ENCODE measurements at regions of chr10 and their contacts with region 1.

Region 1: DNA sequence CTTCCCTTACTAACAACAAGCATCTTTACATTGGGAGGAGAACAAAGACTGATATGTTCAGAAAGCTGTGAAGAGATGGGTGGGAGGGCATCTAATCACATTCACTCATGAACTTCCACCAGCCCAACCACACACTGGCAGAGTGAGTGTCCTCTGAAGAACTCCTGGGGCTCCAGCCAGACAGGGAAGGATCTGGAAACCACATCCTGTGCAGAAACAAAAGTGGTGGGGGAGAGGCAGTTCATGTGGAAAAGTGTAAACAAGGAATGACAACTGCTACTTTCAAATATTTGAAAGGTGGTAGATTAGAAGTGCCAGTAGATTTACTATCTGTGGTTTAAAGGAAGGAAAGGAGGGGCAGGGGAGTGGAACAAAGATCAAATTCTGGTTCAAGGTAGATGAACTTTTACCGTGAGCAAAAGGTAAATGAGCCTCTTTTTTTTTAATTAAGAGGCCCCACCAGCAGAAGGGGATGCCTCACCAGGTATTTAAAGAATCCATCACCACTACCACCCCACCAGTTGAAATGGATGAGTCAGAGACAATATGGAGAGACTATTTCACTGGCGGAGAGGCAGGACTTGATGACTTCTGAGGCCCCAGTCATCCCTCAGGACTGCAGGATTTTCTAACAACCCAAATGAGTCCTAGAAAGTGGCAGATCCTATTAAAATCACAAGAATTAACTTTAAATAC is 34.5 kb downstream of the GOT1 start:
- DNase-seq: no peak
- ATAC-seq: no peak
- H3K4me3 ChIP-seq: no peak overlapping the region
- H3K4me3 Mint-ChIP-seq: no peak overlapping the region
- H3K27ac ChIP-seq: no peak overlapping the region
- H3K27ac Mint-ChIP-seq: peak overlapping the region; percentile 69
- H3K4me1 ChIP-seq: no peaks in the 10 kb centered on the region
- H3K4me1 Mint-ChIP-seq: peaks cover 9% of the 10 kb centered on the region
- H3K27me3 ChIP-seq: no peaks in the 10 kb centered on the region
- H3K27me3 Mint-ChIP-seq: no peaks in the 10 kb centered on the region
- CTCF ChIP-seq: no peak

Region 2: GRCh38 chr10:99372546-99373271 is 23.2 kb before region 1 on chr10:
- CTCF ChIA-PET with region 1: interaction called, 20 read pairs
- POLR2A ChIA-PET with region 1: no interaction called
- intact Hi-C with region 1: no loop called
- DNase-seq: no peak
- ATAC-seq: no peak
- H3K4me3 ChIP-seq: no peak overlapping the region
- H3K4me3 Mint-ChIP-seq: no peak overlapping the region
- H3K27ac ChIP-seq: no peak overlapping the region
- H3K27ac Mint-ChIP-seq: no peak overlapping the region
- H3K4me1 ChIP-seq: no peaks in the 10 kb centered on the region
- H3K4me1 Mint-ChIP-seq: peaks cover 5% of the 10 kb centered on the region
- H3K27me3 ChIP-seq: no peaks in the 10 kb centered on the region
- H3K27me3 Mint-ChIP-seq: peaks cover 20% of the 10 kb centered on the region
- CTCF ChIP-seq: no peak

Region 3: GRCh38 chr10:99382181-99382580 is 13.7 kb before region 1 on chr10:
- CTCF ChIA-PET with region 1: interaction called, 16 read pairs
- POLR2A ChIA-PET with region 1: no interaction called
- intact Hi-C with region 1: no loop called
- DNase-seq: no peak
- ATAC-seq: no peak
- H3K4me3 ChIP-seq: no peak overlapping the region
- H3K4me3 Mint-ChIP-seq: no peak overlapping the region
- H3K27ac ChIP-seq: no peak overlapping the region
- H3K27ac Mint-ChIP-seq: no peak overlapping the region
- H3K4me1 ChIP-seq: no peaks in the 10 kb centered on the region
- H3K4me1 Mint-ChIP-seq: no peaks in the 10 kb centered on the region
- H3K27me3 ChIP-seq: no peaks in the 10 kb centered on the region
- H3K27me3 Mint-ChIP-seq: peaks cover 3% of the 10 kb centered on the region
- CTCF ChIP-seq: no peak

Region 4: GRCh38 chr10:99435986-99436638 is 40.2 kb after region 1 on chr10:
- CTCF ChIA-PET with region 1: interaction called, 11 read pairs
- POLR2A ChIA-PET with region 1: no interaction called
- intact Hi-C with region 1: loop called in 1 of 2 experiments (anchors 2 kb)
- DNase-seq: peak in 2 of 9 experiments; percentile 51 to 58
- ATAC-seq: peak; percentile 62
- H3K4me3 ChIP-seq: no peak overlapping the region
- H3K4me3 Mint-ChIP-seq: no peak overlapping the region
- H3K27ac ChIP-seq: no peak overlapping the region
- H3K27ac Mint-ChIP-seq: no peak overlapping the region
- H3K4me1 ChIP-seq: peaks cover 10% of the 10 kb centered on the region
- H3K4me1 Mint-ChIP-seq: peaks cover 25% of the 10 kb centered on the region
- H3K27me3 ChIP-seq: no peaks in the 10 kb centered on the region
- H3K27me3 Mint-ChIP-seq: no peaks in the 10 kb centered on the region
- CTCF ChIP-seq: peak; percentile 80

Region 5: GRCh38 chr10:99612167-99612831 is 216.4 kb after region 1 on chr10:
- CTCF ChIA-PET with region 1: interaction called, 30 read pairs
- POLR2A ChIA-PET with region 1: no interaction called
- intact Hi-C with region 1: loop called (anchors 1 kb)
- DNase-seq: peak in 6 of 9 experiments; percentile 5 to 73 (median 29)
- ATAC-seq: peak; percentile 75
- H3K4me3 ChIP-seq: no peak overlapping the region
- H3K4me3 Mint-ChIP-seq: no peak overlapping the region
- H3K27ac ChIP-seq: peak overlapping the region in 1 of 2 experiments; percentile 12
- H3K27ac Mint-ChIP-seq: peak overlapping the region; percentile 37
- H3K4me1 ChIP-seq: peaks cover 5% of the 10 kb centered on the region
- H3K4me1 Mint-ChIP-seq: peaks cover 27% of the 10 kb centered on the region
- H3K27me3 ChIP-seq: no peaks in the 10 kb centered on the region
- H3K27me3 Mint-ChIP-seq: no peaks in the 10 kb centered on the region
- CTCF ChIP-seq: peak; percentile 91

Region 6: GRCh38 chr10:99711129-99711719 is 315.3 kb after region 1 on chr10:
- CTCF ChIA-PET with region 1: interaction called, 4 read pairs
- POLR2A ChIA-PET with region 1: no interaction called
- intact Hi-C with region 1: loop called (anchors 1 to 2 kb)
- DNase-seq: peak in 3 of 9 experiments; percentile 25 to 60 (median 49)
- ATAC-seq: peak; percentile 64
- H3K4me3 ChIP-seq: no peak overlapping the region
- H3K4me3 Mint-ChIP-seq: no peak overlapping the region
- H3K27ac ChIP-seq: no peak overlapping the region
- H3K27ac Mint-ChIP-seq: no peak overlapping the region
- H3K4me1 ChIP-seq: no peaks in the 10 kb centered on the region
- H3K4me1 Mint-ChIP-seq: no peaks in the 10 kb centered on the region
- H3K27me3 ChIP-seq: no peaks in the 10 kb centered on the region
- H3K27me3 Mint-ChIP-seq: no peaks in the 10 kb centered on the region
- CTCF ChIP-seq: peak; percentile 41